BJ (cell line): ENCODE measurements at regions of chr5 and their contacts with region 1.

Region 1: GRCh38 chr5:62779010-62779422 is 200.4 kb downstream of the LRRC70 start:
- DNase-seq: no peak
- H3K4me3 ChIP-seq: no peak overlapping the region
- H3K27me3 ChIP-seq: no peaks in the 10 kb centered on the region
- CTCF ChIP-seq: peak; percentile 73

Region 2: GRCh38 chr5:62376064-62376463 is 403.0 kb before region 1 on chr5:
- CTCF ChIA-PET with region 1: no interaction called
- POLR2A ChIA-PET with region 1: no interaction called
- DNase-seq: no peak
- H3K4me3 ChIP-seq: no peak overlapping the region
- H3K27me3 ChIP-seq: no peaks in the 10 kb centered on the region
- CTCF ChIP-seq: no peak

Region 3: DNA sequence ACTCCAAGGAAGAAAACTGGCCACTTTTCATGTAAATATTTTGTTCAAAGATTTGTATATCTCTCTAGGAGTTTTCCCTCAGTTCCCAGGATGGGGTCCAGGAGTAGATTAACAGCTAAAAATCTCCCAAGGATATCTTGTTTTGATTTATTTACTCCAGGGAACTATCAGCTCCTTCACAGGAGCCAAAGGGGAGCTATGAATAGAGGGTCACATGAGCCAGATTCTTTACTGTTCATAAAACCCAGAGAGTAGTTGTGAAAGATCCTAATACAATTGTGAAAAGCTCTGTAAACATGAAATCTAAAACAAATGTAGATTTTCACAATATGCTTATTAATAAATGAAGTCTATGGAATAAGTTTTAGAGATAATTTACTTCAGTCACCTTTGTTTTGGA is 392.2 kb before region 1 on chr5:
- CTCF ChIA-PET with region 1: no interaction called
- POLR2A ChIA-PET with region 1: no interaction called
- DNase-seq: no peak
- H3K4me3 ChIP-seq: no peak overlapping the region
- H3K27me3 ChIP-seq: no peaks in the 10 kb centered on the region
- CTCF ChIP-seq: no peak

Region 4: DNA sequence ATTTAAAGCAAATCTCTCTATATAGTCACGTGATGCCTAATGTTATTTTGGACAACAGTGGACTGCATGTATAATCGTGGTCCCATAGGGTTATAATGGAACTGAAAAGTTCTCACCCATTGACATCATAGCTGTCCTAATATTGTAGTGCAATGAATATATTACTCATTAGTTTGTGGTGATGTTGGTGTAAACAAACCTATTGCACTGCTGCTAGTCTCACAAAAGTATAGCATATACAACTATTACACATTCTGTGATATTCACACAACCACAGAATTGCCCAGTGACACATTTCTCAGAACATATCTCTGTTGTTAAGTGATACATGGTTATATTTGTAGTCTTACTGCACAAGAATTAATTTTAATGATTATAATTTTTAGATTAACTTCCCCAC is 328.8 kb before region 1 on chr5:
- CTCF ChIA-PET with region 1: interaction called, 21 read pairs
- POLR2A ChIA-PET with region 1: no interaction called
- DNase-seq: no peak
- H3K4me3 ChIP-seq: no peak overlapping the region
- H3K27me3 ChIP-seq: no peaks in the 10 kb centered on the region
- CTCF ChIP-seq: no peak

Region 5: GRCh38 chr5:62460578-62460983 is 318.4 kb before region 1 on chr5:
- CTCF ChIA-PET with region 1: interaction called, 21 read pairs
- POLR2A ChIA-PET with region 1: no interaction called
- DNase-seq: no peak
- H3K4me3 ChIP-seq: no peak overlapping the region
- H3K27me3 ChIP-seq: no peaks in the 10 kb centered on the region
- CTCF ChIP-seq: peak; percentile 80

Region 6: DNA sequence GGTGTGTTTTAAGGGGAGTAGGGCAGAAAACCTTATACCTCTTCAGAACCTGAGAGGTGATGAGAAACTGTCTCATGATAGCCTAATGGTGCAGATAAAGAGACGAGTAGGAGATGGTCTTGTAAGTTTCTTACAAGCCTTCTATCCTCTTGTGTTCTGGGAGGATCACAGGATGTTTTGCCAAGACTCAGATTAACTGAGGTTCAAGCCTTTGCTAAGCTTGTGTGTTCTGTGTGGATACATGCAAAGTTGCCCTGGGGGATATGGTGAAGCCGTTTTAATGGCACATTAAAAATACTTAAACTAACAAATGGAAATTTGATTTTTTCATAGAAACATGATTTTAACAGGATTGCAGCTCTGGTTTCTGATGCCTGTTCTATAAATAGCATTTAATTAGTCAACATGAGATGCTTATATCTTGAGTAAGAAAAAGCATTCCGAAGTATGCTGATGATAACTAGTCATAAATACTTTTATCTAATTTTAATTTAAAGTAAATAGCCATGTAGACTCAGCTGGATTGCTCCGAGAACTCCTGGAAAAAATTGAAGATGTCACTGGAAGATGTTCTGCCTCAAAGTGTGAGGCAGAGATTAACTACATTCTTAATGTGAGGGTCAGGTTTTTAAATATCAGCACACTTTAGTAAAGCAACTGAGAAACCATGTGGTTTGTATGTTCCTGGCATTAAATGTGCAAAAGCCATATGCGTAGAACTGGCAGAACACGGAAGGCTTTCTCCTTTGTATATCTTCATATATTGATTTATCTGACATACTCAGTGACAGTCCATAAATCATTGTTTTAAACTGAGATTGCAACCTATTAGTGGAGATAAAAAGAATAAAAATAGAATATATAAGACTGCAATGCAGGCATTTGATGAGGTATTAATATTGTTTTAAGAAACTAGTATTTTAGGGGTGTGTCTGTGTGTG is 312.8 kb before region 1 on chr5:
- CTCF ChIA-PET with region 1: interaction called, 21 read pairs
- POLR2A ChIA-PET with region 1: no interaction called
- DNase-seq: peak; percentile 27
- H3K4me3 ChIP-seq: no peak overlapping the region
- H3K27me3 ChIP-seq: no peaks in the 10 kb centered on the region
- CTCF ChIP-seq: no peak

Region 7: GRCh38 chr5:62486672-62487071 is 292.3 kb before region 1 on chr5:
- CTCF ChIA-PET with region 1: no interaction called
- POLR2A ChIA-PET with region 1: no interaction called
- DNase-seq: no peak
- H3K4me3 ChIP-seq: no peak overlapping the region
- H3K27me3 ChIP-seq: no peaks in the 10 kb centered on the region
- CTCF ChIP-seq: no peak